Activated CD4-positive, alpha-beta T cell treated with anti-CD3 and anti-CD28 coated beads for 36 hours (primary cell): ENCODE measurements at regions of chr14 and their contacts with region 1.

Region 1: GRCh38 chr14:23301288-23301968 is 1.2 kb downstream of the PPP1R3E start:
- DNase-seq: peak; percentile 99
- ATAC-seq: peak; percentile 84
- H3K4me3 Mint-ChIP-seq: peak overlapping the region; percentile 100
- H3K27ac Mint-ChIP-seq: peak overlapping the region; percentile 94
- H3K4me1 Mint-ChIP-seq: peaks cover 18% of the 10 kb centered on the region
- H3K27me3 Mint-ChIP-seq: peaks cover 10% of the 10 kb centered on the region

Region 2: DNA sequence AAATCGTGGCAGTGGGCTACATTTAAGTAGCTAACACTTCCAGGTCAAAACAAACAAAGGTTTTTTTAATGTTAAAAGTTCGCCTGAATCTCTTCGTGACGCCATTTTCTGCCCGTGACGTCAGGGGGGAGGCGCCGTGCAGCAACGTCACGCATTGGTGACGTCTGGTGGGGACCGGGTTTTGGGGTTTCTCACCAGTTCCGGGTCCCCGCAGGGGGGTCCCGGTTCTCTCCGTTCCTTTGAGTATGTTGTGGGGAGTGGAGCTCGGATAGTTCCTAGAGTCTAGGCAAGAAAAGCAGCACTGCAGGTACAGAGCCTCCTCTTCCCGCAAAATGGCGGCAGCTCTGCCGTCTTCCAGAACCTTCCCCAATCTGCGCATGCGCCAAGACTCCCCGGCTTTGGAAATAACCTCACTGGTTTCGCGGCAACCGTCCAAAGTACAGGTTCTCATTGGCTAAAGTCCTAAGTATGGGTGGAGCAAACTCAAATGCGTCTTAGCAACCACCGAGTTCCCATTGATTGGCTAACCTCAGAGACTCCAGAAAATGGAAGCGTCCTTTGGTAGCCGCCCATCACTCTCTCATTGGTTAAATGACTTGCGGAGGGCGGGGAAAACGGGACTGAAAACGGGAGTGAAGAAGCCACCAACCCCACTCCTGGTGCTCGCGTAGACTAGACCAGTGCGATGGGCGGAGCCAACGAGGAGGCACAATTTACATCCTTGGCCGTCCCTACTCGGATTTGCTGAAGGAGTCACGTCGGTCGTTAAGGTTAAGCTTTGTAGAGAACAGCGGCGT is 382.4 kb before region 1 on chr14 and contains the start of gene RBM23:
- CTCF ChIA-PET with region 1: no interaction called
- POLR2A ChIA-PET with region 1: no interaction called
- intact Hi-C with region 1: loop called in 1 of 2 experiments (anchors 1 kb)
- DNase-seq: peak; percentile 100
- ATAC-seq: peak; percentile 97
- H3K4me3 Mint-ChIP-seq: peak within 1 kb of the TSS; percentile 92
- H3K27ac Mint-ChIP-seq: peak within 1 kb of the TSS; percentile 99
- H3K4me1 Mint-ChIP-seq: peaks cover 40% of the 10 kb centered on the region
- H3K27me3 Mint-ChIP-seq: no peaks in the 10 kb centered on the region
- total RNA-seq, gene RBM23: 61.6 to 68.6 TPM

Region 3: GRCh38 chr14:23068476-23069412 is 232.7 kb before region 1 on chr14:
- CTCF ChIA-PET with region 1: interaction called, 7 read pairs
- POLR2A ChIA-PET with region 1: no interaction called
- intact Hi-C with region 1: loop called in 1 of 2 experiments (anchors 5 kb)
- DNase-seq: peak; percentile 84
- ATAC-seq: peak; percentile 79
- H3K4me3 Mint-ChIP-seq: peak overlapping the region; percentile 5
- H3K27ac Mint-ChIP-seq: peak overlapping the region; percentile 80
- H3K4me1 Mint-ChIP-seq: peaks cover 37% of the 10 kb centered on the region
- H3K27me3 Mint-ChIP-seq: no peaks in the 10 kb centered on the region

Region 4: GRCh38 chr14:23269193-23269592 is 32.2 kb before region 1 on chr14:
- CTCF ChIA-PET with region 1: interaction called, 4 read pairs
- POLR2A ChIA-PET with region 1: interaction called, 3 read pairs
- intact Hi-C with region 1: loop called in 1 of 2 experiments (anchors 1 kb)
- DNase-seq: no peak
- ATAC-seq: no peak
- H3K4me3 Mint-ChIP-seq: no peak overlapping the region
- H3K27ac Mint-ChIP-seq: no peak overlapping the region
- H3K4me1 Mint-ChIP-seq: no peaks in the 10 kb centered on the region
- H3K27me3 Mint-ChIP-seq: peaks cover 5% of the 10 kb centered on the region

Region 5: GRCh38 chr14:23406244-23406643 is 104.8 kb after region 1 on chr14:
- CTCF ChIA-PET with region 1: no interaction called
- POLR2A ChIA-PET with region 1: no interaction called
- intact Hi-C with region 1: no loop called
- DNase-seq: no peak
- ATAC-seq: no peak
- H3K4me3 Mint-ChIP-seq: no peak overlapping the region
- H3K27ac Mint-ChIP-seq: no peak overlapping the region
- H3K4me1 Mint-ChIP-seq: no peaks in the 10 kb centered on the region
- H3K27me3 Mint-ChIP-seq: peaks cover 3% of the 10 kb centered on the region

Region 6: GRCh38 chr14:23469127-23469905 is 167.9 kb after region 1 on chr14 and contains the start of gene NGDN:
- CTCF ChIA-PET with region 1: interaction called, 5 read pairs
- POLR2A ChIA-PET with region 1: no interaction called
- intact Hi-C with region 1: loop called in 1 of 2 experiments (anchors 1 kb)
- DNase-seq: peak; percentile 95
- ATAC-seq: peak; percentile 97
- H3K4me3 Mint-ChIP-seq: no peak within 1 kb of the TSS
- H3K27ac Mint-ChIP-seq: no peak within 1 kb of the TSS
- H3K4me1 Mint-ChIP-seq: peaks cover 11% of the 10 kb centered on the region
- H3K27me3 Mint-ChIP-seq: no peaks in the 10 kb centered on the region
- total RNA-seq, gene NGDN: 53.0 to 57.8 TPM

Region 7: DNA sequence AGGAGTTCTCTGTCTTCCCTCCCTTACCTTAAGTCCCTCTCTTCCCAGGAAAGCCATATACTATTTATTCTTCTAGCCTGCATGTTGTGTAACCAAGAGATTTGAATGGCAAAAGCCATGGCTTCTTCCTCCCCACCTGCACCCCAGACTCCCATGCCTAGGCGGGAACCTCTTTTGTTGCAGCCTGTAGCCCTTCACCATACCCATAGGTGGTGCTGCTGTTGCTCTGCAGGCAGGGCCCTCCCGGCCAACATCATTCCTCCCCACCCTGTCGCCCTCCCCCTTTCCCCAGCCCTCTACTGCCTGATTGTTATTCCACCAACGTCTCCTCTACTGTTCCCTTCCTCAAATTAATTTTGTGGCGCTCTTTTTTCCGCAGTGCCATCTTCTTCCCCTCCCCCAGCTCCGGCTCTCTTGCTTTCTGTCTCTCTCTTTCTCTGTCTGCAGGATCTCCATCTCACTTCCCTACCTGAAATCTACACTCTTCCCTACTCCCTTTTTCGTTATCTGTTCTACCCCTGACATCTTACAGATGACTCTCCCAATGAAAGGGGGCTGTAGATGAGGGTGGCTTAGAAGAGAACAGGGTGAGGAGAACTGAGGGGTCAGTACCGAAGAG is 181.9 kb after region 1 on chr14:
- CTCF ChIA-PET with region 1: no interaction called
- POLR2A ChIA-PET with region 1: no interaction called
- intact Hi-C with region 1: no loop called
- DNase-seq: peak; percentile 41
- ATAC-seq: peak; percentile 72
- H3K4me3 Mint-ChIP-seq: no peak overlapping the region
- H3K27ac Mint-ChIP-seq: no peak overlapping the region
- H3K4me1 Mint-ChIP-seq: peaks cover 1% of the 10 kb centered on the region
- H3K27me3 Mint-ChIP-seq: no peaks in the 10 kb centered on the region

Region 8: GRCh38 chr14:24241829-24242443 is 940.5 kb after region 1 on chr14:
- CTCF ChIA-PET with region 1: no interaction called
- POLR2A ChIA-PET with region 1: no interaction called
- intact Hi-C with region 1: loop called in 1 of 2 experiments (anchors 1 kb)
- DNase-seq: peak; percentile 97
- ATAC-seq: peak; percentile 83
- H3K4me3 Mint-ChIP-seq: peak overlapping the region; percentile 94
- H3K27ac Mint-ChIP-seq: peak overlapping the region; percentile 99
- H3K4me1 Mint-ChIP-seq: peaks cover 55% of the 10 kb centered on the region
- H3K27me3 Mint-ChIP-seq: no peaks in the 10 kb centered on the region